ENCODE measurements at regions of chr12 and their contacts with region 1.

Region 1: GRCh38 chr12:121288158-121288845 is 8.2 kb downstream of the CAMKK2 start:
- DNase-seq: no peak
- ATAC-seq: no peak
- H3K4me3 Mint-ChIP-seq: no peak overlapping the region
- H3K27ac Mint-ChIP-seq: peak overlapping the region in 3 of 10 donors; percentile 35 to 55 (median 50)
- H3K4me1 Mint-ChIP-seq: peaks cover 2 to 20% (median 11%) of the 10 kb centered on the region in 4 donors
- H3K27me3 Mint-ChIP-seq: no peaks in the 10 kb centered on the region

Region 2: DNA sequence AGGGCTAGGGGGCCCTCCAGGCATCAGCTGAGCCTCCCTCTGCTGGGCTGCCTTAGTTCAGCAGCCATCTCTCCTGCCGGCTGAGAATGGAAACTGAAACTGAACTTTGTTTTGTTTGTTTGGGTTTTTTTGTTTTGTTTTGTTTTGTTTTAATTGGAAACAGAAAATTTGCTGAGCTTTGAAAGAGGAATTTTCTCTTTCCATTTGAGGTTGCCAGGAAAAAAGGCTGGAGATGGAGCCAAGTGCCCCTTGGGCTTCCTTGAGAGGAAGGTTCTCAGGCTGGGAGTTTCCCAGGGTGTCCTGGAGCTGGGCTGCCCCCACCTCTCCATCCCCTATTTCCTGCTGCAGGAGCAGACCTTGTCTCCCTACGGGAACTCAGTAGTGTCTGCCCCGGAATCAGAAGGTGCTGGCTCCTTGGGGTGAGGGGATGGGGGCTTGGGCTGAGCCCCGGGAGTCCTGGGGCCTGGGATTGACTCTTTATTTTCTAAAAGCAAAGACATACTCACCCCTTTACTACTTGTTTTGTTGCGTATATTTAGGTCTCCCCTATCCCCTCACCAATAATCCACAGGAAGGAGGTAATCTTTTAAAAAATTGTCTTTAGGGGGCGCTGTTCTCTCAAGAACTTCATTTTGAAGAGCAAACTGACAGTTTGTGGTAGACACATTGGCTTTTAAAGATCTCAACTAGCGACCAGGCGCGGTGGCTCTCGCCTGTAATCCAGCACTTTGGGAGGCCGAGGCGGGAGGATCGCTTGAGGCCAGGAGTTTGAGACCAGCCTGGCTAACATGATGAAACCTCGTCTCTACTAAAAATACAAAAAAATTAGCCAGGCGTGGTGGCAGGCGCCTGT is 227.9 kb before region 1 on chr12:
- POLR2A ChIA-PET with region 1: interaction called, 11 read pairs
- DNase-seq: peak; percentile 15 to 82 (median 52)
- ATAC-seq: peak; percentile 94 to 95
- H3K4me3 Mint-ChIP-seq: peak overlapping the region; percentile 74 to 90 (median 86)
- H3K27ac Mint-ChIP-seq: peak overlapping the region; percentile 87 to 99 (median 90)
- H3K4me1 Mint-ChIP-seq: peaks cover 6 to 19% (median 14%) of the 10 kb centered on the region in 4 donors
- H3K27me3 Mint-ChIP-seq: no peaks in the 10 kb centered on the region

Region 3: GRCh38 chr12:121334513-121335343 is 46.4 kb after region 1 on chr12:
- POLR2A ChIA-PET with region 1: no interaction called
- DNase-seq: peak in 5 of 10 donors; percentile 15 to 58 (median 52)
- ATAC-seq: peak; percentile 84 to 90
- H3K4me3 Mint-ChIP-seq: no peak overlapping the region
- H3K27ac Mint-ChIP-seq: peak overlapping the region in 5 of 10 donors; percentile 27 to 52 (median 37)
- H3K4me1 Mint-ChIP-seq: peaks cover 0 to 3% (median under 1%) of the 10 kb centered on the region in 4 donors
- H3K27me3 Mint-ChIP-seq: no peaks in the 10 kb centered on the region

Measured in naive thymus-derived CD8-positive, alpha-beta T cell (primary cell).